Endothelial cell of umbilical vein (primary cell): ENCODE measurements at regions of chr20 and their contacts with region 1.

Region 1: DNA sequence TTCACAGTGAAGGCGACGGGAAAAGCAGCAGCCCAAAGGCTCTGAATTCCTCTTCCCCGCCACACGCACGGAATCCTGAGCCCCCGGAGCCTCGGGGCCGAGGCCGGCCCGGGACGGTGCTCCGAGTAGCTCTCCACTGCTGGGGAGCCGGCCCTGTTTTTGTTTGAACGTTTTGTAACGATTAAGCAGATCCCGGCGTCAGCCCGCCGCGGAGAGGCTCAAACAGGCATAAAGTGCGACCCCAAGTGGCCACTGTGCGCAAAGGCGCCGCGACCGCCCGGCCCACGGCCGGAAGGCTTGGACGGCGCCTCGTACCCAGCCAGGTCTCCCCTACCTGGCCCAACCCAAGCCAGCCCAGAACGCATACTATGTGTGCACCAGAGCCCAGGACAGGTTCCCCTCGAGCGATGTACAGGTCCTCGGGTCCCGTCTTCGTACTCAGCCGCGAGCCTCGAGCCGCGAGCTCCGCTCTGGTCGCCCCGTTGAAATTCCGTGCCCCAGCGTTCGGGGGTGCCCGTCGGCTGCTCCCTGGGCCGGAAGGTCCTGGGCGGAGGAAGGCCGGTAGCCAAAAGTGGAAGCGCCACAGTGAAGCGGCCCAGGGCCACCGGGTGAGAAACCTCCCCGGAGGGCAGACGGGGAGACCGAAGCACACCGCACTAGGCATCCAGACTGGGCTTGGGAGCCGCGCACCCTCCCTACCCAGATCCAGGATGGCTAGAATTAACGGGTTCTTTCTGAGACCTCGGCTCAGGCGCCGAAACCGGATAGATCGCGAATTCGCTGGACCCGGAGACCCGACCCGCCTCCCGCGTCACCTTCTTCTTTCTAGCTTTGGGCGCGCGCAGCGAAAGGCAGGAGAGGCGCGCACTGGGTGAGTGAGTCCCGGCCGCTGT is 1.2 kb upstream of the MAFB start:
- DNase-seq: peak; percentile 81
- H3K4me3 ChIP-seq: peak overlapping the region; percentile 16 to 38 (median 24)
- H3K27ac ChIP-seq: peak overlapping the region; percentile 9
- H3K4me1 ChIP-seq: peaks cover 9% of the 10 kb centered on the region
- H3K27me3 ChIP-seq: peaks cover 45 to 65% of the 10 kb centered on the region in 2 experiments
- CTCF ChIP-seq: peak; percentile 95
- POLR2A ChIP-seq: no peak

Region 2: DNA sequence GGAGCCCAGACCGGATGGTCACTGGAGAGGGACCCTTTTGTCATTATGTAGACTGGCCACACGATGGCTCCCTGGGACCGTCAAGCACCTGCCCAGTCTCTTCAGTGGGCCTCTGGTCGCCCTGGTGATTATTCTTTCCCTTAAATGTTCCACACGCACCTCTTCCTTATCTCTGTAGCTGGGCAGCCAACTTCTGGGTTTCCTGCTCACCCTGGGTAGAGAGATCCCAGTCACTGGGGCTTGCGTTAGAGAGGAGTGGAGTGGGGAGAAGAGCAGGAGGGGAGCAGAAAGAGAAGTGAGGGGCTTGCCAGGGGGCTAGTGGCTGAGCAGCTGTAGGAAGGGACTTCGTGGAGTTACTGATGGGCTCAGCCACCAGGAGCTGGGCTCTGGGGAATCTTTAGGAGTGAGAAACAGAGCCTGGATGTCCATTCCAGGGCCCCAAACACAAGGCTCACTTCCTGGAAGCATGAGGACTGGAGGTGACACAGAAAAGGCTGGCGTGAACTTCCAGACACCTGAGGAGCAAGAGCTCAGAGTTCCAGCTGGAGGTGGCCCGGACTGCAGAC is 1577.9 kb before region 1 on chr20:
- CTCF ChIA-PET with region 1: interaction called, 18 read pairs
- POLR2A ChIA-PET with region 1: interaction called, 6 read pairs
- dilution Hi-C with region 1: no loop called
- intact Hi-C with region 1: no loop called
- DNase-seq: peak; percentile 41
- H3K4me3 ChIP-seq: no peak overlapping the region
- H3K27ac ChIP-seq: no peak overlapping the region
- H3K4me1 ChIP-seq: peaks cover 22% of the 10 kb centered on the region
- H3K27me3 ChIP-seq: peaks cover 2 to 20% of the 10 kb centered on the region in 2 experiments
- CTCF ChIP-seq: peak; percentile 49 to 62
- POLR2A ChIP-seq: no peak

Region 3: GRCh38 chr20:39885975-39886649 is 804.1 kb before region 1 on chr20:
- CTCF ChIA-PET with region 1: interaction called, 14 read pairs
- POLR2A ChIA-PET with region 1: interaction called, 4 read pairs
- dilution Hi-C with region 1: no loop called
- intact Hi-C with region 1: loop called (anchors 1 kb)
- DNase-seq: peak; percentile 58
- H3K4me3 ChIP-seq: no peak overlapping the region
- H3K27ac ChIP-seq: no peak overlapping the region
- H3K4me1 ChIP-seq: no peaks in the 10 kb centered on the region
- H3K27me3 ChIP-seq: no peaks in the 10 kb centered on the region
- CTCF ChIP-seq: peak; percentile 58
- POLR2A ChIP-seq: no peak

Region 4: GRCh38 chr20:40265825-40266533 is 424.2 kb before region 1 on chr20:
- CTCF ChIA-PET with region 1: interaction called, 8 read pairs
- POLR2A ChIA-PET with region 1: no interaction called
- dilution Hi-C with region 1: no loop called
- intact Hi-C with region 1: loop called (anchors 1 kb)
- DNase-seq: peak; percentile 58
- H3K4me3 ChIP-seq: no peak overlapping the region
- H3K27ac ChIP-seq: no peak overlapping the region
- H3K4me1 ChIP-seq: peaks cover 18% of the 10 kb centered on the region
- H3K27me3 ChIP-seq: no peaks in the 10 kb centered on the region
- CTCF ChIP-seq: peak in 1 of 2 donors; percentile 40
- POLR2A ChIP-seq: no peak

Region 5: DNA sequence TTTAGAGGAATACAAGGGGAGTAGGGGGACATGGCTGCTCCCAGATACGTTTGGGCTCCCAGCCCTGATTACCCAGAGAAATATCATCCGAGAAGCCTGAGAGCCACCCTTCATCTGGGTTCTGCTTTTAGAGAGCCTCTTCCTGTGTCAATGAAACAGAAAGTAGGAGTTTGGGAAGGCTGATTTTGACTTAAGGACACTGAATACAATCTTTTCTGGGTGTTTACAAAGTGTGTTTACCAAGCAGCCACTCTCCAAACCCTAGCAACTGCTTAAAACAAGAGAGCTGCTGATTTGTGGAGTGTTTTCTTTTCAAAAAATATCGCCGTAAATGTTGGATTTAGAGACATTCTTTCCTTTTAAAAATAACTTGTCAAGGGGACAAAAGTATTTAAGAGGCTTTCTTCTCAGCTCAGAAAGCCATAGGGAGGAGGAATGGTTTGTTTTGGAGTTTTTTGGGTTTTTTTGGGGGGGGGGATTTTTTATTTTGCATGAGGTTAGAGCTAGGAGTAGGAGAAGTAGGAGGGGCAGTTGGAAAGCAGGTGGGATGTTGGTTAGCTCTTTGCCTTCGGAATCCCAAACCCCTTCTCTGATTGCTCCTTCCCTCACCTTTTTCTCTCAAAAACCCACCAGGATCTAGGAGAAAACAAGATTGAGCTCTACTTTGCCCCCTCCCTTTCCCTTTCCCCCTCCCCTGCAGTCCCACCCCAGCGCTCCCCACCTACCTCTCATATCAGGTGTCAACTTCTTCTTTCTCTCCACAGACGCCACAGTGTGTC is 13.5 kb before region 1 on chr20:
- CTCF ChIA-PET with region 1: interaction called, 9 read pairs
- POLR2A ChIA-PET with region 1: interaction called, 12 read pairs
- dilution Hi-C with region 1: no loop called
- intact Hi-C with region 1: no loop called
- DNase-seq: no peak
- H3K4me3 ChIP-seq: no peak overlapping the region
- H3K27ac ChIP-seq: no peak overlapping the region
- H3K4me1 ChIP-seq: peaks cover 5% of the 10 kb centered on the region
- H3K27me3 ChIP-seq: peaks cover 8 to 11% of the 10 kb centered on the region in 2 experiments
- CTCF ChIP-seq: no peak
- POLR2A ChIP-seq: no peak